HCT116 (cell line): ENCODE measurements at regions of chr4 and their contacts with region 1.

Region 1: GRCh38 chr4:7192252-7193029 is at the start of gene SORCS2:
- DNase-seq: no peak
- ATAC-seq: peak; percentile 90
- H3K4me3 ChIP-seq: no peak within 1 kb of the TSS
- H3K27ac ChIP-seq: no peak within 1 kb of the TSS
- H3K4me1 ChIP-seq: no peaks in the 10 kb centered on the region; a peak in 1 of 4 replicates
- H3K27me3 ChIP-seq: peaks cover 22% of the 10 kb centered on the region; the same call in 1 of the 2 replicates
- CTCF ChIP-seq: peak; percentile 12 to 44 (median 44); a peak in 3 of 6 replicates
- POLR2A ChIP-seq: no peak
- RAD21 ChIP-seq: peak; percentile 50
- total RNA-seq, gene SORCS2: 0.37 TPM

Region 2: DNA sequence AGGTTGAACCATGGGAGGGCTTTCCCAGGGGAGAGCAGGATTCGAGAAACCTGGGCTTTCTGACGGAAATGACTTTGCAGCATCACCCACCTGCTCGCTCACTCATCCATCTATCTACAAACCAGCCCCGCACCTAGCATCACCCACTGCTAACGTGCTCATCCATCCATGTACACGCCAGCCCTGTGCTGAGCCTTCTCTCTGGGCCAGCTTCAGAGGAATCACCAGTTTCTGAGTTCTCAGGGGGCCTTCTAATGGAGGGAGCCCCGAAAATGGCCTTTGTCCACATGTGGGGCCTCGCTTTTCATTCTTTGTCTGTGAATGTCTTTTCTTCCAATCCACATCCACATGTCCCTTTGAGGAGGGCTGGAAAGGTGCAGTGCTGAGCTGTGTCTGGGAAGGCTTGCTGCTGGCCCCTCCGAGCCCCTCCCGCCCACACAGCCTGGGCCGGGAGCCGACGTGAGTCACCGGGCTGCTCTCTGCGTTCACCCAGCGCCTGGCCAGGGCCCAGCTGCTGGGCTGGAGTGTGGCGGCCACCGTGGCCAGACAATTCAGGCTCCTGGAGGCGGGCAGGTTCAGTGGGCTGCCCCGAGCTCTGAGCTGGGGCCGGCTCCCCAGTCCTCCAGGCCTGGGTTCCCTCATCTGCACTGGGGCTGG is 14.6 kb after region 1 on chr4:
- CTCF ChIA-PET with region 1: interaction called, 17 read pairs
- POLR2A ChIA-PET with region 1: interaction called, 10 read pairs
- RAD21 ChIA-PET with region 1: no interaction called
- intact Hi-C with region 1: no loop called
- DNase-seq: no peak
- ATAC-seq: peak; percentile 88
- H3K4me3 ChIP-seq: peak overlapping the region in 1 of 2 experiments; percentile 32; a peak in 2 of 4 replicates
- H3K27ac ChIP-seq: peak overlapping the region; percentile 62
- H3K4me1 ChIP-seq: peaks cover 23 to 34% of the 10 kb centered on the region in 2 experiments
- H3K27me3 ChIP-seq: no peaks in the 10 kb centered on the region
- CTCF ChIP-seq: no peak
- POLR2A ChIP-seq: no peak
- RAD21 ChIP-seq: no peak

Region 3: GRCh38 chr4:7295911-7296660 is 103.6 kb after region 1 on chr4:
- CTCF ChIA-PET with region 1: interaction called, 28 read pairs
- POLR2A ChIA-PET with region 1: no interaction called
- RAD21 ChIA-PET with region 1: interaction called in 1 of 2 experiments, 3 read pairs
- intact Hi-C with region 1: loop called (anchors 1 kb)
- DNase-seq: peak; percentile 10
- ATAC-seq: peak; percentile 77
- H3K4me3 ChIP-seq: no peak overlapping the region
- H3K27ac ChIP-seq: no peak overlapping the region
- H3K4me1 ChIP-seq: no peaks in the 10 kb centered on the region
- H3K27me3 ChIP-seq: no peaks in the 10 kb centered on the region; the same call in 1 of the 2 replicates
- CTCF ChIP-seq: peak; percentile 49 to 81 (median 68); a peak in 5 of 6 replicates
- POLR2A ChIP-seq: no peak
- RAD21 ChIP-seq: peak; percentile 91

Region 4: DNA sequence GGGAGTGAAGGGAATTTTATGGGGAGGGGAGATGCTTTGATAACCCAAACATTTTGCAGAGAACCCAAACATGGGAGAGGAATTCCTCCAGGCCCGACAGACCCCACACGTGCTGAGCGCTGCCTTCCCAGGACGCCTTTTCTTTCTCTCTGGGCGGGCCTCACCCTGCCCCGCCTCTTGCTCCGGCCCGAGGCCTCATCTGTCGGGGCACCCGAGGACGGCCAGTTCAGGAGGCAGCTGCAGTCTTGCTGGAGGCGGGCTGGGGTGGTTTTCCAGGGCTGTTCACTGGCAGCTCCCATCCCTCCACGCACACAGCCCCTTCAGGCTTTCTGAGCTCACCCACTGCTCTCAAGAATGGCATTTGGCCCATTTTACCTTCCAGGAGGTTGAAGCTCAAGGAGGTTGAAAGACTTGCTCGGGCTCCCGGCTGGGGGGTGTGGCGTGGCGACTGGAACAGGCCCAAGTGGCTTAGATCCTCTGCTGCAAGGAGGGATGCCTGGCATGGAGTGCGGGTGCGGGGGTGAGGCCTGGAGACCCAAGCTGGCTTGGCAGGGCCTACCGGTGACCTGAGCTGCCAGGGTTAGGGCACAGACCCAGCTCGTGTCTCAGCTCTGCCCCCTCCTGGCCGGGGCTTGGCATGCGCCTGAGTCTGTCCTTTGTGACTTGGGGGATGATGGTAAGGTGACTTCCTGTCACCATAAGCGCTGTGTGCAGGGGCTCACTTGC is 143.1 kb after region 1 on chr4:
- CTCF ChIA-PET with region 1: interaction called, 26 read pairs
- POLR2A ChIA-PET with region 1: no interaction called
- RAD21 ChIA-PET with region 1: no interaction called
- intact Hi-C with region 1: loop called (anchors 2 kb)
- DNase-seq: peak; percentile 42
- ATAC-seq: peak; percentile 97
- H3K4me3 ChIP-seq: no peak overlapping the region
- H3K27ac ChIP-seq: no peak overlapping the region
- H3K4me1 ChIP-seq: peaks cover 0 to 7% of the 10 kb centered on the region in 2 experiments; a peak in 1 of 4 replicates
- H3K27me3 ChIP-seq: no peaks in the 10 kb centered on the region
- CTCF ChIP-seq: peak; percentile 67 to 91 (median 84)
- POLR2A ChIP-seq: no peak
- RAD21 ChIP-seq: peak; percentile 83

Region 5: DNA sequence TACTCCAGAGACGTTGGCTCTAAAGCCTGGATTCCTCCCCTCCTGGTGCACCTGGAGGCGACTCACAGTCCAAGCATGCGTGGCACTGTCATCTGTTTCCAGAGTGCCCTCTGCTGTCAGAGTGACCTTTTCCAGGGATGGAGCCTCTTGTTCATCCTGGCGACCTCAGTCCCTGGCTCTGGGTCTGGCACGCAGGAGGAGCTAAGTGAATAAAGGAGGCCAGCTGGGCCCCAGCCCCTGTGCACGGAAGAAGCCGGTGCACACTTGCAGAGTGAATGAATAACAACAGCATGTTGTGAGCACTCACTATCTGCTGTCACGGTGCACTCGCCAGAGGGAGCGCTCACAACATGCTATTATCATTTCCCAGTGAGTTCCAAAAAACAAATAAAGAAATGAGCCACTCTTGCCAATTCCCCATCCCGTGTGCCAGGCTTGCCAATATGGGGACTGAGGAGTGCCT is 270.1 kb after region 1 on chr4:
- CTCF ChIA-PET with region 1: no interaction called
- POLR2A ChIA-PET with region 1: no interaction called
- RAD21 ChIA-PET with region 1: no interaction called
- intact Hi-C with region 1: loop called (anchors 2 kb)
- DNase-seq: peak; percentile 27
- ATAC-seq: peak; percentile 91
- H3K4me3 ChIP-seq: no peak overlapping the region
- H3K27ac ChIP-seq: no peak overlapping the region
- H3K4me1 ChIP-seq: peaks cover 0 to 6% of the 10 kb centered on the region in 2 experiments; a peak in 1 of 4 replicates
- H3K27me3 ChIP-seq: no peaks in the 10 kb centered on the region
- CTCF ChIP-seq: peak; percentile 23 to 51 (median 27); a peak in 3 of 6 replicates
- POLR2A ChIP-seq: no peak
- RAD21 ChIP-seq: peak; percentile 74

Region 6: DNA sequence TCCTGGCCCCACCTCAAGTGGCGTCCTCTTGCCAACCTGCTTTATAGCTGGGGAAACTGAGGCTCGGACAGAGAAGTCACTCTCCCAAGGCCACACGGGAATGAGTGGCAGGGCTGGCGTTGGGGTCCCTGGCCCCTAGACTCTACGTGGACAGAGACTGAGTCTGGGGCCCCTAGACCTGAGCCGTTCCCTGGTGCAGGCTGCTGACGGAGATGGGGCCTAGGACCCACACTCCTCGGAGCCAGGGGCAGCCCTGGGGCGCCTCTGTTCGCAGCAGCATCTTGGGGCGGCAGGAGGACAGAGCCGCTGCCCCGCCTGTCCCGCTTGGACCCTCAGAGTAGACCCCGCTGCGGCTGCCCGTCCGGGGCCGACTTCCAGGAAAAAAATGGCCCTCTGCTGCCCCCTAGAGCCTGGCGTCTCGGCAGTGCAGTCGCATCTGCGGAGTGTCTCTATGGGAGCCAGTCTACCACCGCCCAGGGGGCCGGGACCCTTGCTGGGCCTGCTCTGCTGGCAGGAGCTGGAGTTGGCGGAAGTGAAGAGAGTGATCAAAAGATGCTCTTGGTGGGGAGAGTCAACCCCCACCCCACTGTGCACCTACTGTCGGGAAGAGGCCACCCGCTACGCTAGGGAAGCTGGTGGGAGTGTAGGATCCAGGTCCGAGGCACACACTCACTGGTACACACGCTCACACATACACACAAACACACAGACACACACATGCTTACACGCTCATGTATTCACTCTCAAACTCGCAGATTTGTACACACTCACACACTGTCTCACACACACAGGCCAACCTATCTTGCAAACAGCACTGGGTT is 527.1 kb after region 1 on chr4:
- CTCF ChIA-PET with region 1: interaction called, 4 read pairs
- POLR2A ChIA-PET with region 1: no interaction called
- RAD21 ChIA-PET with region 1: no interaction called
- intact Hi-C with region 1: loop called (anchors 2 kb)
- DNase-seq: no peak
- ATAC-seq: peak; percentile 93
- H3K4me3 ChIP-seq: no peak overlapping the region
- H3K27ac ChIP-seq: no peak overlapping the region
- H3K4me1 ChIP-seq: no peaks in the 10 kb centered on the region
- H3K27me3 ChIP-seq: 0 out of 2 replicates have a peak, but pooled peaks cover 6% of the 10 kb centered on the region
- CTCF ChIP-seq: peak; percentile 54 to 86 (median 79); a peak in 5 of 6 replicates
- POLR2A ChIP-seq: no peak
- RAD21 ChIP-seq: peak; percentile 80